ENCODE measurements at regions of chr2 and their contacts with region 1.

Region 1: DNA sequence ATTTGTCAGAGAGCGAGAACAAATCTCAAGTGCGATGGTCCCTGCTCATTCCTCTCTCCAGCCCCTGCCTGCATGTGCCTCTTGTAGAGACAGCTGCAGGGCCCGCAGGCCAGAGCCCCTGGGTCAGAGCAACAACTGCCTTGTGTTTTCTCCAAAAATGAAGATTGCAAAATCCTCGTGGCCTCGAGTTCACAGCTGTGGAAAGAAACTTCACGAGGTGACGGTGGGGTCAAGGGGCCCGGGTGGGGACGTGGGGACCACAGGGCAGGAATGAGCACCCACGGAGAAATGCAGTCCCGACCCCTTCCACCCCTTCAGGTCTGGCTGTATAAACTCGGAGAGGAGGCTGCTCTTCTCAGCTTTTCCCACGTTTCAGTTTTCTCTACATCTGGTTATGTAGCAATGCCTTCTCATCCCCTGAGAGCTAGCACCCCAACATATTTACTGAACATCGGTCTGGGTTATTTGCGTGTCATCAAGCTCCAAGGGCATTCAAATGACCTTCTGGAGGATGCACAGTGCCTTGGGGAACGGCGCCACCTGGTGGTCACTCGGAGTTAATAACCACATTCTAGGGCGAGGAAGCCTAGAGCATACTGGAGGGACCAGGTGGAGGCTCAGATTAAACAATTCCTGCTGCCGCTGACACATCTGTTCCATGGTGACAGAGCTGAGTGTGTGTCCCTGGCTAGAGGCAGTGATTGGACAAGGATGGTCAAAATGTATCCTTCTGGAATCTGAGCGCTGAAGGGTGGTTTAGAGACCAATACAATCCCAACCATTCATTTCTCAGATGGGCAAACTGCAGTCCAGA is 91.4 kb upstream of the CYRIA start:
- DNase-seq: peak; percentile 89
- H3K4me3 Mint-ChIP-seq: no peak overlapping the region
- H3K27ac Mint-ChIP-seq: no peak overlapping the region
- H3K4me1 Mint-ChIP-seq: peaks cover 2% of the 10 kb centered on the region
- H3K27me3 Mint-ChIP-seq: peaks cover 2% of the 10 kb centered on the region

Region 2: GRCh38 chr2:15939854-15940660 is 817.0 kb before region 1 on chr2 and contains the start of gene MYCN:
- intact Hi-C with region 1: loop called (anchors 10 kb)
- DNase-seq: peak; percentile 56
- H3K4me3 Mint-ChIP-seq: peak within 1 kb of the TSS; percentile 58
- H3K27ac Mint-ChIP-seq: no peak within 1 kb of the TSS
- H3K4me1 Mint-ChIP-seq: peaks cover 2% of the 10 kb centered on the region
- H3K27me3 Mint-ChIP-seq: peaks cover 65% of the 10 kb centered on the region
- total RNA-seq, gene MYCN: 0.12 TPM in 1 of 2 replicates, not detected in the other

Region 3: GRCh38 chr2:16525265-16525887 is 231.7 kb before region 1 on chr2:
- intact Hi-C with region 1: loop called (anchors 1 kb)
- DNase-seq: peak; percentile 73
- H3K4me3 Mint-ChIP-seq: no peak overlapping the region
- H3K27ac Mint-ChIP-seq: no peak overlapping the region
- H3K4me1 Mint-ChIP-seq: no peaks in the 10 kb centered on the region
- H3K27me3 Mint-ChIP-seq: peaks cover 5% of the 10 kb centered on the region

Region 4: GRCh38 chr2:16553226-16553625 is 203.8 kb before region 1 on chr2:
- intact Hi-C with region 1: loop called (anchors 2 kb)
- DNase-seq: peak; percentile 71
- H3K4me3 Mint-ChIP-seq: no peak overlapping the region
- H3K27ac Mint-ChIP-seq: no peak overlapping the region
- H3K4me1 Mint-ChIP-seq: no peaks in the 10 kb centered on the region
- H3K27me3 Mint-ChIP-seq: no peaks in the 10 kb centered on the region

Region 5: DNA sequence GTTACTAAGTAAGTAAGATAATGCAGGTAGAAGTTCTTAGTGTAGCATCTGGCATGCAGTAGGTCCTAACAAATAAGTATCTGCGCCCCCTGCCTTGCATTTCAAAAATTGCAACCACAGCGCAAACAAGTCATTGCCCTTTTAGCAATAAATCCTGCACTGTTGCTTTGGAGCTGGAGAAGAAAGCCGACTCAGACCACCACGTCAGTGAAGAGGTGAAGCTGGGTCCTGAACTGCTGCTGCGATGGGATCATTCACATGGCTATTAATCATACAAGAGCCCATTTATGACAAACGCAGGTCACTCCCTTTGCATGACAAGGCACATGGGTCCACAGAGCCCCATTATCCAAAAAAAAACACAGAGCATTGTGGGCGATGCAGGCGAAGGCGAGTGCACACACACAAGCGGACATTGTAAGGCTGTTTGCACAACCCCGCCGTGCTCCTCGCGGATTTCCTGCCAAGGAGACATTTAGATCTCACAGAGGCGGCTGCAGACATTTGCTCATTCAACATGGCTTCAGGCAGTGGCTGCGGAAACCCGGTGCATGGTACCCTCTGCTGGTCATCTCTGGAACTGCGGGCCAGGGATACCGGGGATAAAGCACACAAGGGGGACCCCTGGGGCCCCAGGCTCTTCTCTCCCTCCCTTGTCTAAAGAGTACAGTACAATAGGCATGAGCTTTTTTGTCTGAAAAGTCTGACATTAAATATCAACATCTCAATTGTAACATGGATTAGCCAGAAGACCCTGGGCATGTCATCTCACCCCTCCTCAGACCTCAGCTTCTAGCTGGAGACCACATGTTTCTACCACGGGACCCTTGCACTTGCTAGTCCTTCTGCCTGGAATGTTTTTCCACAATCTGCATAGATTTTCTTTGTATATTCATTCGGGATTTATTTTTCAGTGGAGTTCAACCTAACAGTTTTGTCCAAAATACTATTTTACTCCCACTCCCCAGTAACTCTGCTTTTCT is 148.1 kb before region 1 on chr2:
- intact Hi-C with region 1: loop called (anchors 1 kb)
- DNase-seq: peak; percentile 97
- H3K4me3 Mint-ChIP-seq: peak overlapping the region; percentile 87
- H3K27ac Mint-ChIP-seq: peak overlapping the region; percentile 67
- H3K4me1 Mint-ChIP-seq: peaks cover 4% of the 10 kb centered on the region
- H3K27me3 Mint-ChIP-seq: no peaks in the 10 kb centered on the region

Region 6: GRCh38 chr2:16665748-16666448 is 91.1 kb before region 1 on chr2 and contains the start of gene CYRIA:
- intact Hi-C with region 1: loop called (anchors 1 kb)
- DNase-seq: peak; percentile 89
- H3K4me3 Mint-ChIP-seq: peak within 1 kb of the TSS; percentile 89
- H3K27ac Mint-ChIP-seq: peak within 1 kb of the TSS; percentile 85
- H3K4me1 Mint-ChIP-seq: peaks cover 24% of the 10 kb centered on the region
- H3K27me3 Mint-ChIP-seq: peaks cover 37% of the 10 kb centered on the region
- total RNA-seq, gene CYRIA: 1.7 and 1.8 TPM in 2 replicates